Activated CD4-positive, alpha-beta memory T cell treated with anti-CD3 and anti-CD28 coated beads for 36 hours (primary cell): ENCODE measurements at regions of chr6 and their contacts with region 1.

Region 1: DNA sequence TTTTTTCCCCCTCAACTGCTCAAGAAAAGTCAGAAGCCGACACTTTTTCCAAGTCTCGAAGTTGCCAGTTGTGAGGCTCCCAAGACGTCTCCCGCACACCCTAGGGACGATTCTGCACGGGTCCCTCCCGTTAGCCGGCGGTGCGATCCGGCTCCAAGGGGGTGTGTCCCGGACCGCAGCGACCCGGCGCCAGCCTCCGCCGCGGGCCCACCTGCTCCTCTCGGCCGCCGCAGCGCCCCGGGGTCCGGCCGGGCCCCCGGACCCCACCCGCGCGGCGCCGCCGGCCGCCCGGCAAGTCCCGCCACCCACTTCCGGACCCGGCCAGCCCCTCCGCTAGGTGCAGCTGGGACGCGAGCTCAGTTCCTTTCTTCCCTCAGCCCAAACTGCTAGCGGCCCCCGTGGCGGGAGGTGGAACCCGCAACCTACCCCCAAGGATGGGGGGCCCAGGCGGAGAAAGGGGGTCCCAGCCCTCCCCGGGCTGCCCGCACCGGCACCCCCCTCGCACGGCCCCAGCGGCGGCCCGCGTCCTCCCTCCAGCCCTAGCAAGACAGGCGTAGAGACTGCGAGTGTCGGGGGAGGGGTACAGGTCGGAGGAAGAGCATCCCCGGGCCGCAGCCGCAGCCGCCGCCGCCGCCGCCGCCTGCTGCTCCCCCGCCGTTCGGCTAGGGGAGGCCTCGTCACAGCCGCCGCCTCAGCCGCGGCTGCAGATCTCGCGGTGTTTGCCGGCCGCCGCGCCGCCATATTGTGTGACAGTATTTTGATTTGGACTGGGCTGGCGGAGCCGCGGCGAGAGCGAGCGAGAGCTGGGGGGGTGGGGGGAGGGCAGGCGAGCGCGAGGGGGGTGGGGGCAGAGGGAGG is 485 bp upstream of the TAB2 start:
- DNase-seq: peak; percentile 93
- H3K4me3 Mint-ChIP-seq: peak overlapping the region; percentile 93
- H3K27ac Mint-ChIP-seq: peak overlapping the region; percentile 97
- H3K4me1 Mint-ChIP-seq: peaks cover 24% of the 10 kb centered on the region
- H3K27me3 Mint-ChIP-seq: no peaks in the 10 kb centered on the region

Region 2: DNA sequence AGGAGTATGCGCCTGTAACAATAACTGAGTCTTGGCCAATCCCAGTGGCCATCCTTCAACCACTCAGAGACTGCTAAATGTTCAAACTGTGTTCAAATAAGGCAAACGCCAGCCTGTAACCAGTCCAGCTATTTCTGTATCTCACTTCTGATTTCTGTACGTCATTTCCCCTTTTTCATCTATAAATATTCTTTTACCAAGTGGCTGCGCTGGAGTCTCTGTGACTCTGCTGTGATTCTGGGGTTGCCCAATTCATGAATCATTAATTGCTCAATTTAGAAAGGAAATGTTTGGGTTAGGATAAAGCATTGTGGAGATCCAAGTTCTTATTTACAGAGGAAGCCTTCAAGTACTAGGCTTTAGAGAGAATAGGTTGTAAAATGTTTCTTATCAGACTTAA is 660.0 kb before region 1 on chr6:
- CTCF ChIA-PET with region 1: no interaction called
- POLR2A ChIA-PET with region 1: no interaction called
- intact Hi-C with region 1: no loop called
- DNase-seq: no peak
- H3K4me3 Mint-ChIP-seq: no peak overlapping the region
- H3K27ac Mint-ChIP-seq: no peak overlapping the region
- H3K4me1 Mint-ChIP-seq: no peaks in the 10 kb centered on the region
- H3K27me3 Mint-ChIP-seq: peaks cover 8% of the 10 kb centered on the region

Region 3: DNA sequence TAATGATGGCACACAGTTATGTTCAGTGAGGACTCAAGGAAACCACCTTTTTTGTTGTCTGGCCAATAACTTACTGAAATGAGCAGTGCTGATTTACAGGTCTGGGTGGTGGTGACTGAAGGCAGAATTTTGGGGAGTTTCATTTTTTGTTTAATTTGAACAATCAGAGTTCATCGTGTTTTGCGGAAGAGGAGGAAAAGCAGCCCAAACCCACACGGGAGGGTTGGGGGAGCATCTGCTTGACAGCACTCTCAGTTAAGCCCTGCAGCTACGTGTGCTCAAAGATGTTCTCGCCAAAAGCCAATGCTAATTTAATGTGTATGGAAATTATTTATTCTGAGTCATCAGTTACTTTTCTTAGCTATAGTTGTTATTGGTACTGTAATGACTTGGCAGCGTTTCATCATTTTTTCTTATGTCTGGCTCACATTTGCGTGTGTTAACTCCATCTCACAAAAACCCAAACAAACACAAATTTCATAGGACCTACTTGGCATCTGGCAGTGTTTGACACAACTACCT is 481.0 kb before region 1 on chr6:
- CTCF ChIA-PET with region 1: no interaction called
- POLR2A ChIA-PET with region 1: no interaction called
- intact Hi-C with region 1: loop called (anchors 10 kb)
- DNase-seq: peak; percentile 71
- H3K4me3 Mint-ChIP-seq: peak overlapping the region; percentile 36
- H3K27ac Mint-ChIP-seq: peak overlapping the region; percentile 79
- H3K4me1 Mint-ChIP-seq: peaks cover 49% of the 10 kb centered on the region
- H3K27me3 Mint-ChIP-seq: peaks cover 5% of the 10 kb centered on the region

Region 4: GRCh38 chr6:149140137-149140909 is 176.7 kb before region 1 on chr6:
- CTCF ChIA-PET with region 1: interaction called, 3 read pairs
- POLR2A ChIA-PET with region 1: interaction called, 5 read pairs
- intact Hi-C with region 1: loop called (anchors 1 kb)
- DNase-seq: peak; percentile 93
- H3K4me3 Mint-ChIP-seq: peak overlapping the region; percentile 78
- H3K27ac Mint-ChIP-seq: peak overlapping the region; percentile 96
- H3K4me1 Mint-ChIP-seq: peaks cover 58% of the 10 kb centered on the region
- H3K27me3 Mint-ChIP-seq: no peaks in the 10 kb centered on the region

Region 5: DNA sequence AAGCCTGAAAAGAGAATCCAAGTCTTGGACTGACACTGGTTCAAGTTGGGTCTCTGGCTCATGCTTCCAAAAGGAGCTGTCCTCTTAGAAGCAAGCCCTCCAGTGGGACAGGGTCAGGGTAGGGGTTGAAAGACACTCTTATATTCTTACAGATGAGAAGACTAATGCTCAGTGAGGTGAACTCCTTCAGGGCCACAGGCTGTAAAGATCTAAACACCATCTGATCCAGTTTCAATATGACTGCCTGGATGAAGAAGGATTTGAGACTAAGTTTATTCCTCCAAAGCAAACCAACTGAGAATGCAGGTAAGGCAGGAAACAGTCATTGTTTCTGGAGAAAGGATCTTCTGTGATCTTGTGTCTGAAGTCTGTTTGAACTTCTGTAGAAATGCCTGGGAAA is 98.6 kb before region 1 on chr6:
- CTCF ChIA-PET with region 1: no interaction called
- POLR2A ChIA-PET with region 1: interaction called, 5 read pairs
- intact Hi-C with region 1: loop called (anchors 1 kb)
- DNase-seq: no peak
- H3K4me3 Mint-ChIP-seq: no peak overlapping the region
- H3K27ac Mint-ChIP-seq: peak overlapping the region; percentile 67
- H3K4me1 Mint-ChIP-seq: peaks cover 32% of the 10 kb centered on the region
- H3K27me3 Mint-ChIP-seq: no peaks in the 10 kb centered on the region

Region 6: DNA sequence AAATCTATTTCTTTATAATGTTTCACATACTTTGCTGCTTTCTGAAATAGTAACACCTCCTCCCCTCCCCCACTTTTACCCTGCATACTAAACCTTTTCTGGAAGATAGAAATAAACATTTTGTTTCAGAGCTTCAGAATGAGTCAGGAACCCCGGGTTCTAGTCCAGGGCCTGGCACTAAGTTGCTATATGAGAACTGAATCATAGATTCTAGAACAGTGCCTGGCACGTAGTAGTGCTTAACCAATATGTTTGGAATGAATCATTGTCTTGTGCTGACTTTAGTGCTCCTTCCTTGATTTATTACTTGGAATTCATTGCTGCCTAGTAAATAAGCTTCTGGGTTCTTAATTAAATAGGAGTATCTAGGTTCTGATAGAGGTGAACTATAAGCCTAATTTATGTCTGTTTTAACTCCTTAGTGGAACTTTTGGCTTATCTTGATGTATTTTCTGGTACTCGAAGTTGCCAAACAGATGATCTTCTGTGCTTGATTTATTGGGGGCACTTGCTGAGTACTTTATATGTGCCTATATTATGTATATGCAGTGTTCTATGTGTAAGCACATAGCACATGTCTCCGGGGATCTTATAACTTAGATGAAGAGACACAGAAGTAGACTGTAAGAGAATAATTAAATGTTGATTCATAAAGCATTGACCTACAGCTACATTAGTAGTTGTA is 19.0 kb after region 1 on chr6:
- CTCF ChIA-PET with region 1: interaction called, 6 read pairs
- POLR2A ChIA-PET with region 1: interaction called, 57 read pairs
- intact Hi-C with region 1: loop called (anchors 1 kb)
- DNase-seq: peak; percentile 75
- H3K4me3 Mint-ChIP-seq: peak overlapping the region; percentile 62
- H3K27ac Mint-ChIP-seq: peak overlapping the region; percentile 95
- H3K4me1 Mint-ChIP-seq: peaks cover 86% of the 10 kb centered on the region
- H3K27me3 Mint-ChIP-seq: no peaks in the 10 kb centered on the region

Region 7: DNA sequence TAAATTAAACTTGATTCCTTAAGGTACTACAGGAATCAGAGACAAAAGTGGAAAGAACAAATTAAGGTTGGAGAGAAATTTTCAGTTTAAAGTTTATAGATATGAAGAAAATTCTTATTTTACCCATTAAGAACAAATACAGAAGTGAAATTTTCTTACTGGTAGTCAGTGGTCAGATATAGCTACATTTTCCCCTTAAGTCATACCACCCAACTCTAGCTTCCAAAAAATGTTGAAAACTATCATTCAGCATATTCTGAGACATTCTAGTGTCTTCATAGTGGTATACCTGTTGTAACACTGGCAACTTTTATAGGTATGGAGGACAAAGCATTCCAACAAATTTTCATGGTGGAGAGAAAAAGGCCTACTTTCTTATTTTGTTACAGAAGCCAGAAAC is 67.4 kb after region 1 on chr6:
- CTCF ChIA-PET with region 1: no interaction called
- POLR2A ChIA-PET with region 1: no interaction called
- intact Hi-C with region 1: no loop called
- DNase-seq: no peak
- H3K4me3 Mint-ChIP-seq: no peak overlapping the region
- H3K27ac Mint-ChIP-seq: no peak overlapping the region
- H3K4me1 Mint-ChIP-seq: peaks cover 55% of the 10 kb centered on the region
- H3K27me3 Mint-ChIP-seq: no peaks in the 10 kb centered on the region

Region 8: GRCh38 chr6:149484733-149485700 is 168.0 kb after region 1 on chr6 and contains the start of gene ZC3H12D:
- CTCF ChIA-PET with region 1: no interaction called
- POLR2A ChIA-PET with region 1: interaction called, 5 read pairs
- intact Hi-C with region 1: loop called (anchors 1 kb)
- DNase-seq: peak; percentile 92
- H3K4me3 Mint-ChIP-seq: peak within 1 kb of the TSS; percentile 98
- H3K27ac Mint-ChIP-seq: peak within 1 kb of the TSS; percentile 98
- H3K4me1 Mint-ChIP-seq: peaks cover 44% of the 10 kb centered on the region
- H3K27me3 Mint-ChIP-seq: no peaks in the 10 kb centered on the region
- total RNA-seq, gene ZC3H12D: 124 to 129 TPM